Activated T-helper 1 cell treated with anti-CD3 and anti-CD28 coated beads, Interleukin-12 subunit alpha, Interleukin-12 subunit beta, Interleukin-2, Interleukin-4 antibody, amounts not matched to agents 30 ng/mL and 10 ng/mL and 1 ng/mL, durations not matched to agents 14 hours and 24 hours and 36 hours (primary cell): ENCODE measurements at regions of chr18 and their contacts with region 1.

Region 1: DNA sequence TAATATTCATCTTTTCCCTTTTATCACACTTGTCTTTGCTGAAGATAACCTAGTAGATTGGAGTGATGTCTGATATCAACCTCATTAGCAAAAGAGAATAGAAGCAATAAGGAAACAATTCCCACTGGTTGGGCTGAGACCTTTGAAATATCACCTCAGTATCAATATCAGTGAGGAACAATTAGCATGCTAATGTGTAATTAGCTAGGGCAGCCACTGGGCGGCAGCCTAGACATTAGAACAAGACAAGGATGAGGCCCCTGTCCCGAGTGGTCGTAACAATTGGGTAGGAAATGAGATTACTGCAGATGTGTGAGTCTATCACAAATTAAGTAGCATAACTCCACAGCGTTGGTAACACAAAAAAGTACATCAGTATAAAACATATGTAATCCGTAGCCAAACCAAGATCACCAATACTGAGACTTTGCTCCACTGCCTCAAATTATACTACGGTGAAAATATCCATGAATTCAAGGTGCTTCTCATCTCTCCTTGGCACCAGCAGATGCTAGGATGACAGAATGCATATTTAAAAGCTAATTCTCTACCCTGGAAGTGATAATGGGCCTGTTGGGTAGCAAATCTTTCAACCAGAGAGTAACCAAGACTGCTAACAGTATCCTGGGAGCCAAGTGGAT is 99.1 kb downstream of the ALPK2 start:
- DNase-seq: peak; percentile 43
- H3K4me3 Mint-ChIP-seq: no peak overlapping the region
- H3K27ac Mint-ChIP-seq: no peak overlapping the region
- H3K4me1 Mint-ChIP-seq: peaks cover 26% of the 10 kb centered on the region
- H3K27me3 Mint-ChIP-seq: peaks cover 10% of the 10 kb centered on the region

Region 2: DNA sequence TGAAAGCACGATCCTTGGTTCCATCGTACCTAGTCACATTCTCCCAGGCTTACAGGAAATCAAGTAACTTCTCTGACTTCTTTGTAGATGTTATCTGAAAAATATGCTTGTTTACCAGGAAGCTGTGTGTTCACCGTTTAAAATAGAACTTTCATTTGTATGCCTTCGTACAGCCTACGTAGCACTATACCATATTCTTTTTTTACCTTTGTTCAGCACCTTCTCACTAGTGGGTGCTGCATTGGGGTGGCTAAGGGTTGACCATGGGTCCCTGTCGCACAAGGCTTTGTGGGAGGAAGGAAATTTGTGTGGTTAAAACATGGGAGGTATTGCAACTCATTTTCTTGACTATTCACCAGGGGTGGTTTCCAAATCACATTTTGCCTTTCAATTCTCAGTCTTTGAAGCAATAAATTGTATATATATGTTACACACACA is 158.1 kb after region 1 on chr18:
- intact Hi-C with region 1: loop called (anchors 5 kb)
- DNase-seq: peak; percentile 68
- H3K4me3 Mint-ChIP-seq: peak overlapping the region; percentile 53
- H3K27ac Mint-ChIP-seq: peak overlapping the region; percentile 83
- H3K4me1 Mint-ChIP-seq: peaks cover 60% of the 10 kb centered on the region
- H3K27me3 Mint-ChIP-seq: no peaks in the 10 kb centered on the region

Region 3: DNA sequence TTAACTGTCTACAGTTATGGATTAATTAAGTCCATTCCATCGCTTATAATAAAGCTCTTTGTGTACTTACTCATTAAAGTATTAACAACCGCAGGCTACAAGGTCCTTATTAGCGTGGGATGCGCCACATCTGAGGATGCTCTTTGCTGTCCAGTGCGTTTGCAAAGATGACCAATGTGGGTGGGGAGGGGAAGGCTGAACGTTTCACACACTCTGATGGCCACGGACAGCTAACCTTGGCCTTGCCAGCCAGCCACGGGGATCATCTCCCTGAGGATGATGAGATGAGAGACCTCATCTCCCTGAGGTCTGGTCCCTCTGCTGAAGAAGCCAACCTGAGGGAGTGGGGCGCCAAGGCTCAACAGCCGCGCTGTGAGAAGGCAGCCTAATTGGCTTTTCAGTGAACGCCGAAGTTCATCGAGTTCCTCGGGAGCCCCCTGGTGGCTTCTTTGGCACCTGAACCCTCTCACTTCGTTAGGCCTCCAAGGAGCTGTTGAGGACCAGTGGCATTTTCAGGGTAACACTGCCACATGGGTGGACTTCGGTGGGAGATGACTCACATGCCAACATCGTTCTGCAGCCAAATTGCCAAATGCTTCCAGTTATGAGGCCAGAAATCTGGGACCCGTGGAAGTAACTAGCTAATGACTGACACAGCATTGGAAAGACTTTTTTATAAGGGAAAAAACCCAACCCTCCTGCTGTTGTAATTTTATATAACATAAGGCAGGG is 540.5 kb after region 1 on chr18:
- intact Hi-C with region 1: loop called (anchors 10 kb)
- DNase-seq: peak; percentile 54
- H3K4me3 Mint-ChIP-seq: no peak overlapping the region
- H3K27ac Mint-ChIP-seq: no peak overlapping the region
- H3K4me1 Mint-ChIP-seq: no peaks in the 10 kb centered on the region
- H3K27me3 Mint-ChIP-seq: peaks cover 11% of the 10 kb centered on the region